ENCODE measurements at regions of chr10 and their contacts with region 1.

Region 1: DNA sequence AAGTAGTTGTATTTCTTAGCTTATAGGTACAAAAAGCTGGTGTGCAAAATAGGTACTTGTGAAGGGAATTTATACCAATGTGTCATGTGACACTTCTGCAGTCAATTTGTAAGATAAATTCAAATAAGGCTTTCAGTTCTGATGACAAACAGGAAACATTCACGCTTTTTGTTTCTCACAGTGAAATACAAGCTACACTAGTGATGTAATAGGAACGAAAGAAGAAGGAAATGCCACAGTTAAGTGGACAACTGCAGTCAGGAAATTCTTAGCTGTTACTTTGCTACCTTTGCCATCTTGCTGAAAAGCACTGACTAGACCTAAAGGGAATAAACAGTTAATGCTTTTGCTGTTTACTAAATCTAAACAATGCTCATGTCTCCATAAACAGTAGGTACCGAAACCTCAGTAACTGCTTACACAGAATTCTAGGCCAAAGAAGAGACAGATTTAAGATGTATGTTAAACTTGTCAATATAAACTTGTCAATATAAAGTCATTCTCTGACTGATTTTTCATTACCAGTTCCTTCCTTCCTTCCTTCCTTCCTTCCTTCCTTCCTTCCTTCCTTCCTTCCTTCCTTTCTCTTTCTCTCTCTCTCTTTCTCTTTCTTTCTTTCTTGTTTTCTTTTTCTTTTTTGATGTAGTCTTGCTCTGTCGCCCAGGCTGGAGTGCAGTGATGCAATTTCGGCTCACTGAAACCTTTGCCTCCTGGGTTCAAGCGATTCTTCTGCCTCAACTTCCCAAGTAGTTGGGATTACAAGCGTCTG is 10.1 kb downstream of the OTUD1 start:
- DNase-seq: no peak
- ATAC-seq: peak in 3 of 8 donors; percentile 20 to 30 (median 29)
- H3K4me3 ChIP-seq: no peak overlapping the region
- H3K27ac ChIP-seq: peak overlapping the region in 3 of 10 donors; percentile 5 to 56 (median 10)
- H3K4me1 ChIP-seq: peaks cover 3 to 69% (median 31%) of the 10 kb centered on the region in 9 donors
- H3K27me3 ChIP-seq: no peaks in the 10 kb centered on the region
- CTCF ChIP-seq: no peak

Region 2: GRCh38 chr10:22833781-22834180 is 615.2 kb before region 1 on chr10:
- intact Hi-C with region 1: no loop called
- DNase-seq: no peak
- ATAC-seq: no peak
- H3K4me3 ChIP-seq: no peak overlapping the region
- H3K27ac ChIP-seq: no peak overlapping the region
- H3K4me1 ChIP-seq: no peaks in the 10 kb centered on the region
- H3K27me3 ChIP-seq: no peaks in the 10 kb centered on the region
- CTCF ChIP-seq: no peak

Region 3: GRCh38 chr10:23053036-23053435 is 395.9 kb before region 1 on chr10:
- intact Hi-C with region 1: no loop called
- DNase-seq: no peak
- ATAC-seq: no peak
- H3K4me3 ChIP-seq: no peak overlapping the region
- H3K27ac ChIP-seq: no peak overlapping the region
- H3K4me1 ChIP-seq: peaks cover 0 to 9% (median 0%) of the 10 kb centered on the region in 9 donors
- H3K27me3 ChIP-seq: peaks cover 0 to 8% (median 0%) of the 10 kb centered on the region in 7 donors
- CTCF ChIP-seq: no peak

Region 4: DNA sequence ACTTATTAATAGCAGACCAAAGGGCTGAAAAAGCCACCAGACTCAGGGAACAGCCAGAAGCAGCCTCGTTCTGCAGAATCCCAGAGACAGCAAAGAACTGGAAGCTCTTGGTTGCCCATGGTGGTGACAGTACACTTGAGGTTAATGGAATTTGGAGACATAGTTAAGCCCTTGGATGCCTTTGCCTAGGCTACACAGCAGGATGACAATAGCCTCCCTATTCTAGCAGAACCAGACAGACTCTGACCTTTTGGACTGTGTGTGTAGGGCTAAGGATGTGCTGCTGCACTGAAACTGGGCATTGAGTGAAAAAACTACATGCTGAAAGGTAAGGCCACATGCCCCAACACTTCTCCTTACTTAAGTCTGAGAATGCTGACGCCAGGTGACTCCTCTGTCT is 12.6 kb after region 1 on chr10:
- intact Hi-C with region 1: loop called in 1 of 10 experiments (anchors 1 kb)
- DNase-seq: no peak
- ATAC-seq: peak in 7 of 8 donors; percentile 38 to 86 (median 80)
- H3K4me3 ChIP-seq: no peak overlapping the region
- H3K27ac ChIP-seq: peak overlapping the region in 7 of 10 donors; percentile 13 to 81 (median 41)
- H3K4me1 ChIP-seq: peaks cover 0 to 21% (median 7%) of the 10 kb centered on the region in 9 donors
- H3K27me3 ChIP-seq: no peaks in the 10 kb centered on the region
- CTCF ChIP-seq: no peak

Measured in heart right ventricle (tissue), 16 donors.